Activated CD4-positive, alpha-beta T cell treated with anti-CD3 and anti-CD28 coated beads for 36 hours (primary cell): ENCODE measurements at regions of chr6 and their contacts with region 1.

Region 1: GRCh38 chr6:30066577-30067459 is at the start of gene PPP1R11:
- DNase-seq: peak; percentile 99
- ATAC-seq: peak; percentile 98
- H3K4me3 Mint-ChIP-seq: peak within 1 kb of the TSS; percentile 86
- H3K27ac Mint-ChIP-seq: peak within 1 kb of the TSS; percentile 97
- H3K4me1 Mint-ChIP-seq: peaks cover 53% of the 10 kb centered on the region
- H3K27me3 Mint-ChIP-seq: peaks cover 7% of the 10 kb centered on the region
- total RNA-seq, gene PPP1R11: 47.8 to 59.9 TPM

Region 2: GRCh38 chr6:29887819-29888776 is 178.7 kb before region 1 on chr6:
- CTCF ChIA-PET with region 1: no interaction called
- POLR2A ChIA-PET with region 1: no interaction called
- intact Hi-C with region 1: loop called in 1 of 2 experiments (anchors 2 kb)
- DNase-seq: peak; percentile 90
- ATAC-seq: peak; percentile 77
- H3K4me3 Mint-ChIP-seq: peak overlapping the region; percentile 77
- H3K27ac Mint-ChIP-seq: peak overlapping the region; percentile 80
- H3K4me1 Mint-ChIP-seq: peaks cover 16% of the 10 kb centered on the region
- H3K27me3 Mint-ChIP-seq: no peaks in the 10 kb centered on the region

Region 3: DNA sequence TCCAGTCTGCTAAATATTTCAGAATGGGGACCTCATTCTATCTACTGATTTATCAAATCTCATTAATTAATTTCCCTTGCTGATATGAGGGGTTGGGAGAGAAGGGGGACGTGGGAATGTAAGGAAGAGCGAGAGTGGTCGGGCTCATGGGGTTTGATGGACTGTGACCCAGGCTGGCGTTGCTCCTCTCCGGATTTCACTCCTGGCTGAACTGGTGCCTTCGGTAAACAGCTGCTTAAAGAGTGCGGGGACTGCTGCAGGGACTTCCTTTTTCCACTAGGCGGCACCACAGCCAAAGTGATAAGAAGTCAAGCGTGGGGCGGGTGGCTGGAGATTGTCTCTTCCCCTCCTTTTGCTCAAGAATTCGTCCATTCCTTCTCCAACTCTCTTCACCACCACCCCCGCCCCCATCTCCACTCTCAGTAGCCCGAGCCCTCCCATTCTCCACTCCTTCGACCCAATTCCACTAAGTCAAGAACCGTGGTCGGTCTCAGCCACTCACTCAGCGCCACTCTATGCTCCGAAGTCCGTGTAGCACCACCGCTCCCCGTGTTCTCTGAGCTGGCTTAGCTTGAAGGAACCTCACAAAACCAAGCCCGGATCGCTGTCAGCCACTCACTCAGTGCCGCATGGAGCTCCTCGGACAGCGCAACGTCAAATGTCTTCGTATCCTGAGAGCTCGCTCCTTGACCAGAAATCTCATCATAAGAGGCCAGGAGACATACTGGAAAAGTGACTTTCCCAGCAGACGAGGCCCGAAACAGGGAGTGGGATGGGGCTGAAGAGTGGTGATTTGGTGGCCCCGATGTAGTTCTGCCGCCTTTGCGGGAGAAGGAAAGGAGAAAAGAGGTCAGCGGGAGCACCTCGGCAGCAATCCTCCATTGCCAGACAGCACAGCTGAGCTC is 36.4 kb after region 1 on chr6:
- CTCF ChIA-PET with region 1: interaction called, 21 read pairs
- POLR2A ChIA-PET with region 1: interaction called, 4 read pairs
- intact Hi-C with region 1: loop called (anchors 1 to 5 kb)
- DNase-seq: peak; percentile 90
- ATAC-seq: peak; percentile 79
- H3K4me3 Mint-ChIP-seq: peak overlapping the region; percentile 73
- H3K27ac Mint-ChIP-seq: peak overlapping the region; percentile 65
- H3K4me1 Mint-ChIP-seq: peaks cover 36% of the 10 kb centered on the region
- H3K27me3 Mint-ChIP-seq: peaks cover 47% of the 10 kb centered on the region

Region 4: GRCh38 chr6:30212865-30213666 is 146.2 kb after region 1 on chr6 and contains the start of gene TRIM26:
- CTCF ChIA-PET with region 1: no interaction called
- POLR2A ChIA-PET with region 1: interaction called, 4 read pairs
- intact Hi-C with region 1: loop called (anchors 1 to 2 kb)
- DNase-seq: peak; percentile 98
- ATAC-seq: peak; percentile 90
- H3K4me3 Mint-ChIP-seq: peak within 1 kb of the TSS; percentile 89
- H3K27ac Mint-ChIP-seq: peak within 1 kb of the TSS; percentile 99
- H3K4me1 Mint-ChIP-seq: peaks cover 50% of the 10 kb centered on the region
- H3K27me3 Mint-ChIP-seq: no peaks in the 10 kb centered on the region
- total RNA-seq, gene TRIM26: 48.4 to 60.4 TPM

Region 5: DNA sequence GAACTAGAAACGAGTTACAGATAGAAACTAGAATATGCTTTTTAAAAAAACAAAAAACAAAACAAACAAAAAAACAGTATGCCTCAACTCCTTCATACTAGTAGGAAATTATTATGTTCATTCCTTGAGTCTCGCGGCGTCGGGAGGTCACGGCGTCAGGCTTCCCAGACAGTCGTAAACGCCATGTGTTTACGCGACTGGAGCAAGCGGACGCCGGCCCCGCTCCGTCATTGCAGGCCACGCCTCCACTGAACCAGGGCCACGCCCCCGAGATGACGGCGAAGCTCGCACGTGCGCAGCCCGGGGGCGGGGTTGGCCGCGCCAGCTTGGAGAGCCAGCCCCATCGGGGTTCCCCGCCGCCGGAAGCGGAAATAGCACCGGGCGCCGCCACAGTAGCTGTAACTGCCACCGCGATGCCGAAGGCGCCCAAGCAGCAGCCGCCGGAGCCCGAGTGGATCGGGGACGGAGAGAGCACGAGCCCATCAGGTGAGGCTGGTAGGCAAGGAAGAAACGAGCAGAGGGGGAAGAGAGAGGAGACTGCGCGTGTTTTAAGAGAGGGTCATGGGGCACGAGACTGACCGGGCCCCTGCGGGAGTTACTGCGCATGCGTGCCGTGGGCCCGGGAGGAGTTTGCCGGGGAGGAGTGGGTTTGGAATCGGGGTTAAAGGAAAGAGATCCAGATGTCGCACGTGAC is 504.4 kb after region 1 on chr6 and contains the start of gene ABCF1:
- CTCF ChIA-PET with region 1: no interaction called
- POLR2A ChIA-PET with region 1: no interaction called
- intact Hi-C with region 1: loop called in 1 of 2 experiments (anchors 2 kb)
- DNase-seq: peak; percentile 100
- ATAC-seq: peak; percentile 86
- H3K4me3 Mint-ChIP-seq: peak within 1 kb of the TSS; percentile 94
- H3K27ac Mint-ChIP-seq: peak within 1 kb of the TSS; percentile 100
- H3K4me1 Mint-ChIP-seq: peaks cover 62% of the 10 kb centered on the region
- H3K27me3 Mint-ChIP-seq: no peaks in the 10 kb centered on the region
- total RNA-seq, gene ABCF1: 100.0 to 105 TPM